Breast epithelium (tissue), 4 donors: ENCODE measurements at regions of chr2 and their contacts with region 1.

Region 1: GRCh38 chr2:226411727-226412360 is 387.8 kb downstream of the IRS1 start:
- DNase-seq: no peak
- H3K4me3 ChIP-seq: no peak overlapping the region
- H3K27ac ChIP-seq: no peak overlapping the region
- H3K4me1 ChIP-seq: no peaks in the 10 kb centered on the region
- H3K27me3 ChIP-seq: no peaks in the 10 kb centered on the region
- CTCF ChIP-seq: no peak
- POLR2A ChIP-seq: no peak

Region 2: DNA sequence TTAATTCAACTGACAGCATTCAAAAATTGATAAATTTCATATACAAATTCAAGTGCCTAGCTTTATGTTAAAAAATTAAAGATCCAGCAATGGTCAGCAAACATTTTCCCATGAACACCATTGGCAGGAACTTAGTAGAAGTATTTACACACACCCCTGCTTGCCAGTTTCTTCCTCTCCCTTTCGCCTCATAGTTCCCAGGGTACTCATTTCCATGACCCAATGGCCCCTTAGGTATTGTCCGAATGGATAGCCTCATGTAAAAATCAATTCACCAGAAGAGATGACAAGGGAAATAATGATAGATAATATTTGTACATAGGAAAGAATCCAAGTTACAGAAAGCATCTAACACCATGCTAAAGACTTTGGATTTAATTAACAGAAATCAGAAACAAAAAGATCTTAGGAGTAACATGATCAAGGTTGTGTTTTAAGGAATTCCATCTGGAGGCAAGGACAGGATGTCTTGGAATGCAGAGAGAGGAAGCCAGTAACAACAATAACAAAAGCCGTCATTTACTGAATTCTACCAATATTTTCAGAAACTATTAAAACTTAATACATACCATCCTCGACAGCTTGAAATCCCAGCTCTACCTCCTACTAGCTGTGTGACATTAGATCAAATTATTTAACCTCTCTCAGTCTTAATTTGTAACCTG is 35.2 kb before region 1 on chr2:
- intact Hi-C with region 1: loop called (anchors 2 kb)
- DNase-seq: no peak
- H3K4me3 ChIP-seq: no peak overlapping the region
- H3K27ac ChIP-seq: no peak overlapping the region
- H3K4me1 ChIP-seq: no peaks in the 10 kb centered on the region
- H3K27me3 ChIP-seq: no peaks in the 10 kb centered on the region
- CTCF ChIP-seq: no peak
- POLR2A ChIP-seq: no peak

Region 3: GRCh38 chr2:227143895-227144294 is 732.1 kb after region 1 on chr2:
- intact Hi-C with region 1: loop called (anchors 5 kb)
- DNase-seq: no peak
- H3K4me3 ChIP-seq: no peak overlapping the region
- H3K27ac ChIP-seq: no peak overlapping the region
- H3K4me1 ChIP-seq: no peaks in the 10 kb centered on the region
- H3K27me3 ChIP-seq: no peaks in the 10 kb centered on the region
- CTCF ChIP-seq: no peak
- POLR2A ChIP-seq: no peak